AG04449 (cell line): ENCODE measurements at regions of chr16 and their contacts with region 1.

Region 1: DNA sequence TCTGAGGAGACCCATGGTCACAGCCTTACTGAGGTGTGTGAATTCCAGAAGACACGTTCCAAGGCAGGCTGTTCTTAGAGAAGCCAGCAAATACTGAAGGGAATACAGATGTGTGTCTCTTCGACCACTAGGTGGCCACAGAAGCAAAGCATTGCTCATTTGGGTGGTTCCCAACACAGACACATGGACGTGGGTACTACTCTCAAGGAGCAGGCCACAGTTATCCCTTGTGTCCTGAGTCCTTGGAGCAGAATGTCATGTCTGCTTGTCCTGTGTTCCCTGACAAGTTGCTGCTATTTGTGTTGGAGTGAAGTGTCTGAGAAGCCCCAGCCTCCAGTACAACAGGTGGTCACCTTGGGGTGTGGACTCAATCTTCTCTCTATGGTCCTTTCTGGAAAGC is 30.3 kb downstream of the HMOX2 start:
- DNase-seq: no peak
- H3K4me3 ChIP-seq: no peak overlapping the region
- CTCF ChIP-seq: peak; percentile 82

Region 2: DNA sequence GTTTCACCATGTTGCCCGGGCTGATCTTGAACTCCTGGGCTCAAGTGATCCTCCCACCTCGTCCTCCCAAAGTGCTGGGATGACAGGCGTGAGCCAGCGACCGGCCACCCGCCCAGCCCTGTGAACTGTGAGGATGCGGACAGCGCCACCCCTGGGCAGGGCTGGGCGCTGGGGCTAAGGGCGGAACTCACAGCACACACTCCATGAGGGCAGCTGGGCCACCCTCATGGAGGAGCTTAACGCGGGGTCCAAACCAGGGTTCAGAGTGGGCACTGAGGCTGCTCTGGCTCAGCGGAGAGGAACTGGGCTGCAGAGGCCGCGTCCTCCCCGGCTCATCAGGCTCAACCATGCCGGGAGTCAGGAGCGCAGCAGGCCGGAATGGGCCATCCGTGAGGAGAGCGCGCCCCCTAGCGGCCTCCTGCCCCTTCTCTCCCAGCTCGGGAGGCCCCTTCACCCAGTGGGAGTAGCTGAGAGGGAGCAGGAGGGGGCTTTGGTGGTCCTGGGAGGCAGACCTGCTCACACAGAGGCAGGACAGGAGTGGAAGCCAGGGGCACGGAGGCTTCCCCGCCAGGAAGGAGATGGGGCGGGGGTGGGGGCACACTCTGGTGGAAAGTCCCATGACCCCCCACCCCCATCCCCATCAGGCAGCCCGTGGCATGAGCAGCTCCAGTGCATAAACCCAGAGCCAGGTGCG is 103.9 kb before region 1 on chr16:
- CTCF ChIA-PET with region 1: no interaction called
- POLR2A ChIA-PET with region 1: no interaction called
- DNase-seq: no peak
- H3K4me3 ChIP-seq: peak overlapping the region; percentile 15
- CTCF ChIP-seq: peak; percentile 90

Region 3: DNA sequence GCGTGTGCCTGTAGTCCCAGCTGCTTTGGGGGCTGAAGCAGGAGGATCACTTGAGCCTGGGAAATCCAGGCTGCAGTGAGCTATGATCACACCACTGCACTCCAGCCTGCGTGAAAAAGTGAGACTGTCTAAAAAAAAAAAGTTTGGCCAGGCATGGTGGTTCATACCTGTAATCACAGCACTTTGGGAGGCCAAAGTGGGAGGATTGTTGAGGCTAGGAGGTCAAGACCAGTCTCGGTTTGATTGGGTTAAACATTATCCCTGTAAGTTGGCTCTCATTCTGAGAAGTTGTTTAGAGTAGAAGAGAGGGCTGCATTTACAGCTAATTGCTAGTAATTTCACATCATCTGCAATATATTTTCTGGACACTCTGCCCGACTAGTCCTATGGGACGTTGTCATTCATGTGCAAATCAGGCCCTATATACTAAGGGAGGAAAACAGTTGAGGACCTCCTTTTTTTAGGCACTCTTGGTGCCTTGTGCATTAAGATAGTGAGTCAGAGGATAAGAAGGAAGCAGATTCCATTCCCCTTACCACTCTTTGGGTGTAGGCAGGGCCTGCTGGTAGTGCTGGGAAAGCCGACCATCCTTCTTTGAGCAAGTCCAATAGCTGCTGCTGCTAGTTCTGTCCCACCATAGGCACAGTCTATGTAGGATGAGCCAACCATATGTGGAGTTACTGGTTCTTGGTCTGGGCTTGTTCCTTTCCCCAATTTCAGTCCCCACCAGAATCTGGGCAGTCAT is 11.5 kb before region 1 on chr16:
- CTCF ChIA-PET with region 1: interaction called, 57 read pairs
- POLR2A ChIA-PET with region 1: no interaction called
- DNase-seq: no peak
- H3K4me3 ChIP-seq: no peak overlapping the region
- CTCF ChIP-seq: no peak

Region 4: DNA sequence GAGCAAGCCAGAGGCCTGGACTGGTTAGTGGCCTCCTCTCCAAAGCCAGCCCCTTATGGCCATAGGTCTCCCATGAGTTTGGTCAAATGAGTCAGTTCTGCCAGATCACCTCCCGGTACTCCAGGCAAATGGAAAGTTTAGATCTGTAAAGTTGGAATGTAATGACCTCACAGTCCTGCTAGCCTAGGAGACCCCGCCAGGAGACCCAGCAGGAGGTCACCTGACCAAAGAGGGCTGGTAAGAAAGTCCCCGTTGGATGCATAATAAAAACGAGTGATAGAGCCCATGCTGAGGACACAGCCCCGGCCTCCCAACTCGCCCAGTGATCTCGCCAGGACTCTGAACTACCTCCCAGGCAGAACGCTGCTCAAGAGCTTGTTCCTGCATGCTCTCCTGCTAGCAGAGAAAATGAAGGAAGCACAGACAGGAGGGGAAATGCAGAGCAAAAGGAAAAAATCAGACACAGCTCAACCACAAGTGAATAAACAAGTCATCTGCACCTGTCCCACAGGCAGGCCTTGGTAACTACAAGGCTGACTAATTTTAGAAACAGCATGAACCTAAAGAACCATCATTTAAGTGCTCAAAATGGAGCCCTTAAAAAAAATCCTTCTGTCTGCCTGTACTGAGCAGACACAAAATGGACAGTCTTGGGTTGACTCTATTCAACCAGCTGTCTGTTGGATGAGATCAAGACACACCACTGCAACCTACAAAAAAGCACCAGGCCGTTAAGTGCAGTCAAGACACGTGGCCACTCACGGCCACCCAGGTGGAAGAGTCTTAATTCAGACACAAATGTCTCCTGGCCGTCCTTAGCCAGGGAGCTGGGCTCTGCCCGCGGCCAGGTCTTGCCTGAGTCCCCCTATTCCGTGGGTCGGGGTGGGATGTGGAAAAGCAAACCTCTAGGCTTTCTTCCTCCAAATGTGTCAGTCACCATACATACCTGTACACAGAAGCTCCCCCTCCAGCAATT is 22.9 kb after region 1 on chr16:
- CTCF ChIA-PET with region 1: interaction called, 22 read pairs
- POLR2A ChIA-PET with region 1: no interaction called
- DNase-seq: no peak
- H3K4me3 ChIP-seq: no peak overlapping the region
- CTCF ChIP-seq: no peak

Region 5: DNA sequence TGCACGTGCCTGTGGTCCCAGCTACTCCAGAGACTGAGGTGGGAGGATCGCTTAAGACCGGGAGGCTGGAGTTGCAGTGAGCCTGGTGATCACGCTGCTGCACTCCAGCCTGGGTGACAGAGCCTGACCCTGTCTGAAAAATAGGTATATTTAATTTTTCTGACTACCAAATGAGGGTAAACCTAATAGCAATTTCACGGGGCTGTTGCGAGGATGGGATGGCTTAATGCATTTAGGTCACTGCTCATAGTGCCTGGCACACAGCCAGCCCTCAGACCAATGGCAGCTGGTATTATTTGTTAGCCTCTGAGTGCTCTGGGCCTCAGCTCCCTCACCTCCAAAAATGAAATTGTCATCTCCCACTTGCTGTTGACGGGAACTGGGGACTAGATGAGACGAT is 38.0 kb after region 1 on chr16:
- CTCF ChIA-PET with region 1: interaction called, 267 read pairs
- POLR2A ChIA-PET with region 1: no interaction called
- DNase-seq: no peak
- H3K4me3 ChIP-seq: no peak overlapping the region
- CTCF ChIP-seq: no peak

Region 6: GRCh38 chr16:4593069-4593468 is 86.6 kb after region 1 on chr16:
- CTCF ChIA-PET with region 1: interaction called, 69 read pairs
- POLR2A ChIA-PET with region 1: no interaction called
- DNase-seq: no peak
- H3K4me3 ChIP-seq: no peak overlapping the region
- CTCF ChIP-seq: no peak